ENCODE measurements at regions of chr7 and their contacts with region 1.

Region 1: DNA sequence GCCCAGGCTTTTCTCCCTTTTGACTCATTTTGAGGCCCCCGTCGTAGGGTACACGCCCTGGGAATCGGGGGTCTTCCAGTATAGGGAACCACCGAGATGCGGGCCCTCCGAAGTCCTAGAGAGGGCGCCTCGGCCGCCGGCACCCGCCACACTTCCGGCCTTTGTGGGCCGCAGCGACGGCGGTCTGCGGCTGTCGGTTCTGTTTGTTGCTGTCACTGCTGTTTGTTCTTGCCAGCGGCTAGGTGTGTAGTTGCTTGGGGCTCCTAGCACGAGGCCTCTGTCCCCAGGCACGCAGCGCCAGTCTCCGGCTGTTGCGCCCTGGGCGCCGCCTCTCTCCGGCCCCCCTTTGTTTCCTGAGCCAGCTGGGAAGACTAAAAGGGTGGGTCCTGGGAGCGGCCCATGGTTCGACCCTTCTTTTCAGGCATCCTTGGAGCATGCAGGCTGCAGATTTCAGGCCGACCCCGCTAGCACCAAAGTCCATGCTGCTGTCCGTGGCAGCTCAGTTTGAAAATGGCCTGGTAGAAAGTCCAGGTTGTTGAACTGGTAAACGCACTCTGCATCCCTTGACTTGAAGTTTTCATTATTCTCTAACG is 17.8 kb upstream of the ZKSCAN1 start:
- DNase-seq: peak; percentile 55 to 76 (median 72)
- ATAC-seq: peak; percentile 96
- H3K4me3 ChIP-seq: peak overlapping the region; percentile 43
- H3K4me3 Mint-ChIP-seq: peak overlapping the region; percentile 71 to 85 (median 76)
- H3K27ac ChIP-seq: peak overlapping the region; percentile 71
- H3K27ac Mint-ChIP-seq: peak overlapping the region; percentile 57 to 95 (median 87)
- H3K4me1 ChIP-seq: peaks cover 7 to 11% of the 10 kb centered on the region in 2 donors
- H3K4me1 Mint-ChIP-seq: peaks cover 7 to 21% (median 18%) of the 10 kb centered on the region in 7 donors
- H3K27me3 ChIP-seq: no peaks in the 10 kb centered on the region
- H3K27me3 Mint-ChIP-seq: peaks cover 0 to 3% (median 0%) of the 10 kb centered on the region in 5 donors

Region 2: GRCh38 chr7:99624484-99624883 is 373.2 kb before region 1 on chr7:
- CTCF ChIA-PET with region 1: no interaction called
- POLR2A ChIA-PET with region 1: no interaction called
- intact Hi-C with region 1: loop called (anchors 5 to 10 kb)
- DNase-seq: peak; percentile 34 to 89 (median 86)
- ATAC-seq: peak; percentile 96
- H3K4me3 ChIP-seq: peak overlapping the region; percentile 62
- H3K4me3 Mint-ChIP-seq: peak overlapping the region; percentile 83 to 95 (median 89)
- H3K27ac ChIP-seq: peak overlapping the region; percentile 89
- H3K27ac Mint-ChIP-seq: peak overlapping the region; percentile 91 to 100 (median 97)
- H3K4me1 ChIP-seq: peaks cover 23 to 30% of the 10 kb centered on the region in 2 donors
- H3K4me1 Mint-ChIP-seq: peaks cover 34 to 76% (median 60%) of the 10 kb centered on the region in 7 donors
- H3K27me3 ChIP-seq: no peaks in the 10 kb centered on the region
- H3K27me3 Mint-ChIP-seq: no peaks in the 10 kb centered on the region

Region 3: DNA sequence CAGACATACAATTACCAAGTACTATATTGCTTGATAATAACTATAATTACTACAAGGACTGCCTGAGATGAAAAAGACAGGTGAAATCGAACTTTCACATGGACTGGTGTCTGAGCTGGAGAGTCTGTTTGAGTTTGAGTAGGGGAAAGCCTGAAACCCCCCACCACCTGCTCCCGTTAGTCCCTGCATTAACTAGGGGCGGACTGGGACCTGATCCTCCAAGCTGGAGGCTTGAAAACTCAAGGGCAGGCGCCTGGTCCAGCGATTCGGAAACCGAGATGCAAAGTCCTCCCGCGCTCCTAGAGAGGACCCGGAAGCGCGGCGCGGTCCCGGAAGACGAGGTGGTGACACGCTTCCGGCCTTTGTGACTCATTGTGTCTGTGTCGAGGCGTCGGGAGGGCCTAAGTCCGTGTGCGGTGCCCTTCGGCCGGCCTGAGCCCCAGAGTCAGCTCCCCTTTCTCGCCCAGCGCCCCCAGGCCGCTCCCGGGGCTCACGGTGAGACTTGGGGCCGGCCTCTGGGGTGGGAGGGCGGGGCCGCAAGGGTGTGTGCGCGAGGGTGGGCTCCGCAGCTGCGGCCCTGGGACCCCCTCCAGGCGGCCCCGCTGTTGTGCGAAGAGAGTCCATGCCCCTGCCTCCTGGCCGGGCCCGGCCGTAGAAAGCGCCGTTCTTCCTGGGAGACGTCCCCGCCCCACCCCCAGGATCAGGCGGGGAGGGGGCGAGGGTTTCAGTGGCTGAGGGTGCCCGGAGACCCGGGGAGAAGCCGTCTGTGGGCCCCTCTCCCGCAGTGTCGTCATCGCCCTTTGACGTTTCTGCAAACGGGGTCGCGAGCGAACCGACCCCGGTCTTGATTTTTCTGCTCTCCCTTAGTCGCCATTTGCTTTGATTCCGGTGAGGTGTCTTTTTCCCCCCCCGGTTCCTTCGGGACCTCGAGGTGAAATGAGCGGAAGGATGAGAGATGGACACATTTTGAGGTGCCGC is 17.9 kb after region 1 on chr7 and contains the start of gene ZKSCAN1:
- CTCF ChIA-PET with region 1: interaction called, 3 read pairs
- POLR2A ChIA-PET with region 1: interaction called, 42 read pairs
- intact Hi-C with region 1: loop called (anchors 1 kb)
- DNase-seq: peak; percentile 68 to 86 (median 81)
- ATAC-seq: peak; percentile 99
- H3K4me3 ChIP-seq: peak within 1 kb of the TSS; percentile 51
- H3K4me3 Mint-ChIP-seq: peak within 1 kb of the TSS; percentile 92 to 98 (median 96)
- H3K27ac ChIP-seq: peak within 1 kb of the TSS; percentile 98
- H3K27ac Mint-ChIP-seq: peak within 1 kb of the TSS; percentile 91 to 98 (median 97)
- H3K4me1 ChIP-seq: peaks cover 19 to 22% of the 10 kb centered on the region in 2 donors
- H3K4me1 Mint-ChIP-seq: peaks cover 23 to 57% (median 44%) of the 10 kb centered on the region in 7 donors
- H3K27me3 ChIP-seq: no peaks in the 10 kb centered on the region
- H3K27me3 Mint-ChIP-seq: peaks cover 0 to 3% (median 0%) of the 10 kb centered on the region in 5 donors
- total RNA-seq, gene ZKSCAN1: 54.0 to 103 (median 70.1) TPM

Region 4: DNA sequence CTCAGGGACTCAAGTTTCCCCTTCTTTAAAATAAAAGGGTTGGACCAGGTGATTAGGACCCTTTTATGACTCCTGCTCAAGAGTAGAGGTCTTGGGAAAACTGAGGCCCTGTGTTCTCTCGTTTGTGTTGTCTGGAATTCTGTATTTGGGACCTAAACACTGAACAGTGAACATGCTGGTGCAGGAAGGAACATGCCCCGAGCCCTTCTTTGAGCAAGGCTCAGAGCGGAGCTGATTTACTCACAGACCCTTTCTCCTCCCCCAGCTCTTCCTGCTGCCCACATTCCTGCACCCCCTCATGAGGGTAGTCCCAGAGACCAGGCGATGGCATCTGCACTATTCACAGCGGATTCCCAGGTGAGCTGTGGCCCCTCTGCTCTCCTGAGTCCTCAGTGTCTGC is 32.0 kb after region 1 on chr7:
- CTCF ChIA-PET with region 1: no interaction called
- POLR2A ChIA-PET with region 1: no interaction called
- intact Hi-C with region 1: no loop called
- DNase-seq: no peak
- ATAC-seq: no peak
- H3K4me3 ChIP-seq: no peak overlapping the region
- H3K4me3 Mint-ChIP-seq: no peak overlapping the region
- H3K27ac ChIP-seq: no peak overlapping the region
- H3K27ac Mint-ChIP-seq: no peak overlapping the region
- H3K4me1 ChIP-seq: no peaks in the 10 kb centered on the region
- H3K4me1 Mint-ChIP-seq: peaks cover 0 to 9% (median 0%) of the 10 kb centered on the region in 7 donors
- H3K27me3 ChIP-seq: no peaks in the 10 kb centered on the region
- H3K27me3 Mint-ChIP-seq: no peaks in the 10 kb centered on the region

Region 5: GRCh38 chr7:100049441-100050311 is 52.0 kb after region 1 on chr7 and contains the start of gene ZSCAN21:
- CTCF ChIA-PET with region 1: interaction called, 4 read pairs
- POLR2A ChIA-PET with region 1: interaction called, 7 read pairs
- intact Hi-C with region 1: loop called (anchors 1 kb)
- DNase-seq: peak; percentile 70 to 89 (median 78)
- ATAC-seq: peak; percentile 94
- H3K4me3 ChIP-seq: peak within 1 kb of the TSS; percentile 92
- H3K4me3 Mint-ChIP-seq: peak within 1 kb of the TSS; percentile 86 to 95 (median 92)
- H3K27ac ChIP-seq: peak within 1 kb of the TSS; percentile 95
- H3K27ac Mint-ChIP-seq: peak within 1 kb of the TSS; percentile 81 to 98 (median 97)
- H3K4me1 ChIP-seq: peaks cover 0 to 6% of the 10 kb centered on the region in 2 donors
- H3K4me1 Mint-ChIP-seq: peaks cover 4 to 29% (median 25%) of the 10 kb centered on the region in 7 donors
- H3K27me3 ChIP-seq: no peaks in the 10 kb centered on the region
- H3K27me3 Mint-ChIP-seq: peaks cover 0 to 3% (median 0%) of the 10 kb centered on the region in 5 donors
- total RNA-seq, gene ZSCAN21: 3.9 to 10.1 (median 6.2) TPM

Region 6: GRCh38 chr7:100342765-100343164 is 345.1 kb after region 1 on chr7:
- CTCF ChIA-PET with region 1: no interaction called
- POLR2A ChIA-PET with region 1: no interaction called
- intact Hi-C with region 1: loop called in 1 of 2 experiments (anchors 10 kb)
- DNase-seq: no peak
- ATAC-seq: no peak
- H3K4me3 ChIP-seq: no peak overlapping the region
- H3K4me3 Mint-ChIP-seq: no peak overlapping the region
- H3K27ac ChIP-seq: peak overlapping the region; percentile 38
- H3K27ac Mint-ChIP-seq: peak overlapping the region; percentile 49 to 90 (median 73)
- H3K4me1 ChIP-seq: peaks cover 4 to 9% of the 10 kb centered on the region in 2 donors
- H3K4me1 Mint-ChIP-seq: peaks cover 6 to 46% (median 34%) of the 10 kb centered on the region in 7 donors
- H3K27me3 ChIP-seq: no peaks in the 10 kb centered on the region
- H3K27me3 Mint-ChIP-seq: no peaks in the 10 kb centered on the region